ENCODE measurements at regions of chr11 and their contacts with region 1.

Region 1: GRCh38 chr11:5684646-5685362 is at the start of gene TRIM5:
- DNase-seq: peak; percentile 64
- ATAC-seq: peak; percentile 89
- H3K4me3 Mint-ChIP-seq: peak within 1 kb of the TSS; percentile 83
- H3K27ac Mint-ChIP-seq: peak within 1 kb of the TSS; percentile 99
- H3K4me1 Mint-ChIP-seq: peaks cover 41% of the 10 kb centered on the region
- H3K27me3 Mint-ChIP-seq: no peaks in the 10 kb centered on the region
- CTCF ChIP-seq: no peak
- total RNA-seq, gene TRIM5: 31.8 to 35.3 TPM (median 32.8 TPM) in 3 replicates

Region 2: DNA sequence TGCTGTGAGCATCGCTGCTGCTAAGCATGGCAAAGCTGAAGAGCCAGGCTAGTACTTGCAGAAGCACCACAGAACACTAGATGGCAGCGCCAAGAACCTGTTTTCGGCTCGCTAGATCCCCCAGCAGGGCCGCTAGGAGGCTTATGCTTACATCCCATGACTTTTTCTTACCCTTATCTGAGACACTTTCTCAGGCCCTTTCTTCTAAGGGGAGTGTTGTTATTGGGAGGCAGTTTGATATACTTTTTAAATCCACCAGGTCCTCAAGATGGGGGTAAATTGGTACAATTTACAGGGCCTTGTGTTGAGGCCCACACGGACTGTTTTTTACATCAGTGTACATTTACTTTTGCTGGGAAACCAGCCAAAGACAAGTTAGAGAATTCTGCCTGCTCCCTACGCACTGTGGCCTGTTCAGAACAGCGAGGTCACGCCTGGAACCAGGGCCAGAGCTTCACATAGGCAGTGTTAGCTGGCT is 84.4 kb before region 1 on chr11:
- CTCF ChIA-PET with region 1: interaction called, 10 read pairs
- POLR2A ChIA-PET with region 1: no interaction called
- DNase-seq: peak; percentile 69
- ATAC-seq: peak; percentile 76
- H3K4me3 Mint-ChIP-seq: peak overlapping the region; percentile 14; the same call in 1 of the 2 replicates
- H3K27ac Mint-ChIP-seq: peak overlapping the region; percentile 41; the same call in 1 of the 2 replicates
- H3K4me1 Mint-ChIP-seq: peaks cover 53% of the 10 kb centered on the region
- H3K27me3 Mint-ChIP-seq: no peaks in the 10 kb centered on the region
- CTCF ChIP-seq: no peak

Region 3: DNA sequence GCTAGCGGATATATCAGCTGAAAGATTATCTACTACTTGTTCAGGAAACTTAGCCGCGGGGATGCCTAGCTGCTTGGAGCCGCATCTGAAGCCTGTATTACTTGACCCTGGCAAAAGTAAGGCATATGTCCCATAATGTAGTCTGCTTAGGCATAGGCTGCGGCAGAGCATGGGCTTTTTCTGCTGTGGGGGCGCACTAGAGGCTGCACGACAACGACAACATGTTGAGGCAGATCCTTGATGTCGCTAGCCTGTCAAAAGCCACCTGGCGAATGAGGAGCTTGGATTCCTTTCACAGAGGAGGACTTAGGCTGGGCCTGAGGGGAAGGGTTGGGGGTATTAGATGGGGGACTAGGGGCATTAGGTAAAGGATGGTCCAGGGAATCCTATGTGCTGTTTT is 122.8 kb after region 1 on chr11:
- CTCF ChIA-PET with region 1: interaction called, 10 read pairs
- POLR2A ChIA-PET with region 1: no interaction called
- DNase-seq: peak; percentile 43
- ATAC-seq: peak; percentile 72
- H3K4me3 Mint-ChIP-seq: no peak overlapping the region
- H3K27ac Mint-ChIP-seq: no peak overlapping the region
- H3K4me1 Mint-ChIP-seq: peaks cover 30% of the 10 kb centered on the region
- H3K27me3 Mint-ChIP-seq: no peaks in the 10 kb centered on the region; the same call in 1 of the 2 replicates
- CTCF ChIP-seq: no peak

Measured in WTC11 (cell line).